ENCODE measurements at regions of chr22 and their contacts with region 1.

Region 1: DNA sequence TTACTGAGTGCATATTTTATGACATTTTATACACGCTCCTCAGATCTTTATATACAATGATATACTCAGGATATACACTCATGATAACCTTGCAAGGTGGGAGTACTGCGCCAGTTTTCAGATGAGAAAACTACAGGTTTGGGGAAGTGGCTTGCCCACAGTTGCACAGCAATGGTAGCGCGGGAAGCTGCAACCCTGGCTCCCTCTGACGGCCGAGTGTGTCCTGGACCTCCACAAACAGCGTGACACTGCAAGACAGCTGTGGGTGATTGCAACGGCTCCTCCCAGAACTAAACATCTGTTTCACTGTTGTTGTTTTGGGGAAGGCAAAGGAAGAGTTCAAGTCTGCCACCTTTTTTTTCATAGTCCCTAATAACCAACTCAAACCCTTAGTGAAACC is 47.0 kb downstream of the PACSIN2 start:
- DNase-seq: peak; percentile 48 to 62 (median 55)
- ATAC-seq: peak; percentile 96
- H3K4me3 ChIP-seq: no peak overlapping the region
- H3K27ac ChIP-seq: no peak overlapping the region
- H3K4me1 ChIP-seq: peaks cover 5 to 9% of the 10 kb centered on the region in 2 experiments
- H3K27me3 ChIP-seq: no peaks in the 10 kb centered on the region
- CTCF ChIP-seq: peak; percentile 49 to 56 (median 54); a peak in 5 of 6 replicates
- EP300 ChIP-seq: no peak
- POLR2A ChIP-seq: no peak
- RAD21 ChIP-seq: peak; percentile 30 to 75; a peak in 3 of 4 replicates

Region 2: DNA sequence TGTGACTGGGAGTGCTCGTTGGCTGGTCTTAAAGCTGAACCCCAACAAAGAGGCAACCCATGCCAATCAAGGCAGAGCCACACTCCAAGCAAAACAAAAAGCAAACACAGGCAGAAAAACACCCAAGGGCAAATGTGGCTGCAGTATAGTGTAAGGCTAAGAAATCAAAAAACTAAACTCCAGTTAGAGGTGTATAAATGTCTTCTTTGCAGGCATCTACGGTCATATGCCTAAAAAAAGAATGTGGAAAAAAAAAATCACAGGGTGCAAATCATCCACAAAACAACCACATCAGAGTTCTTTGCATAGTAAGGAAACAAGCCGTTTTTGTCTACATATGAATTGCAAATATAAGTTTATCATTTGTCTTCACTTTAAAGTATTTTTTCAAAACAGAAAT is 138.6 kb before region 1 on chr22:
- CTCF ChIA-PET with region 1: no interaction called
- POLR2A ChIA-PET with region 1: no interaction called
- in situ Hi-C with region 1: no loop called
- intact Hi-C with region 1: no loop called
- DNase-seq: no peak
- ATAC-seq: no peak
- H3K4me3 ChIP-seq: no peak overlapping the region
- H3K27ac ChIP-seq: no peak overlapping the region
- H3K4me1 ChIP-seq: no peaks in the 10 kb centered on the region
- H3K27me3 ChIP-seq: no peaks in the 10 kb centered on the region
- CTCF ChIP-seq: no peak
- EP300 ChIP-seq: no peak
- POLR2A ChIP-seq: no peak
- RAD21 ChIP-seq: no peak

Region 3: DNA sequence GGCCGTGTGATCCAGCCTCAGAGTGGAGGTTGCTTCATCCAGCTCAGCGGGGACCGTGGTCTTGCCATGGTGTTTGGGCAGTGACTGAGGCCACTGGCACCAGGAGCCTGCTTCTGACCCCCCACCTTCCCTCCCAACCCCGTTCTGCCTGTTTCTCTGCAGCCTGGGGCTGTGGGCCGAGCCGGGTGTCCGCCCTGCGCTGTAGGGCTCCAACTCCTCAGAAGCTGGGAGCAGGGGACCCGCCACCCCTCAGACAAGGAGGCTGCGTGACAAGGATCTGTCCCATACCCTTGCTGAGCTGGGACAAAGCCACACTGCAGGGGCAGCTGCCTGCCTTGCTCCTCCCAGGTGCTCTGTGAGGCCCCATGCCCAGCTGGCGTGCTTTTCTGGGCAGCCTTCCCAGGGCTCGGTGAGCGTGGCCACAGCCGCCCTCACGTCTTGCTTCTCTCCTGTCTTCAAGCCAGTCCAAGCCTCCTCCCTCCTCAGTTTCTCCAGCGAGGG is 99.1 kb before region 1 on chr22:
- CTCF ChIA-PET with region 1: no interaction called
- POLR2A ChIA-PET with region 1: no interaction called
- in situ Hi-C with region 1: no loop called
- intact Hi-C with region 1: loop called (anchors 5 kb)
- DNase-seq: no peak
- ATAC-seq: no peak
- H3K4me3 ChIP-seq: no peak overlapping the region
- H3K27ac ChIP-seq: no peak overlapping the region
- H3K4me1 ChIP-seq: peaks cover 0 to 4% of the 10 kb centered on the region in 2 experiments; a peak in 1 of 5 replicates
- H3K27me3 ChIP-seq: no peaks in the 10 kb centered on the region
- CTCF ChIP-seq: no peak
- EP300 ChIP-seq: no peak
- POLR2A ChIP-seq: no peak
- RAD21 ChIP-seq: no peak

Region 4: GRCh38 chr22:42978453-42979103 is 10.6 kb after region 1 on chr22:
- CTCF ChIA-PET with region 1: no interaction called
- POLR2A ChIA-PET with region 1: no interaction called
- in situ Hi-C with region 1: no loop called
- intact Hi-C with region 1: no loop called
- DNase-seq: no peak
- ATAC-seq: no peak
- H3K4me3 ChIP-seq: no peak overlapping the region
- H3K27ac ChIP-seq: no peak overlapping the region
- H3K4me1 ChIP-seq: peaks cover 4 to 12% of the 10 kb centered on the region in 2 experiments
- H3K27me3 ChIP-seq: no peaks in the 10 kb centered on the region
- CTCF ChIP-seq: no peak
- EP300 ChIP-seq: no peak
- POLR2A ChIP-seq: no peak
- RAD21 ChIP-seq: no peak

Region 5: GRCh38 chr22:43142880-43143562 is 175.1 kb after region 1 on chr22 and contains the start of gene MCAT:
- CTCF ChIA-PET with region 1: no interaction called
- POLR2A ChIA-PET with region 1: no interaction called
- in situ Hi-C with region 1: no loop called
- intact Hi-C with region 1: no loop called
- DNase-seq: peak; percentile 84 to 87 (median 85)
- ATAC-seq: peak; percentile 98
- H3K4me3 ChIP-seq: peak within 1 kb of the TSS; percentile 96
- H3K27ac ChIP-seq: peak within 1 kb of the TSS; percentile 72
- H3K4me1 ChIP-seq: peaks cover 0 to 14% of the 10 kb centered on the region in 2 experiments; a peak in 3 of 5 replicates
- H3K27me3 ChIP-seq: no peaks in the 10 kb centered on the region
- CTCF ChIP-seq: 0 out of 6 replicates have a peak, but pooled peaks of 1 of the 3 experiments have one; percentile 3
- EP300 ChIP-seq: no peak
- POLR2A ChIP-seq: peak; percentile 70
- RAD21 ChIP-seq: no peak
- polyA plus RNA-seq, gene MCAT: 3.3 to 4.6 TPM

Measured in K562 (cell line).